GM18951 (cell line): ENCODE measurements at regions of chr14 and their contacts with region 1.

Region 1: GRCh38 chr14:45267071-45267470 is 14.1 kb upstream of the MIS18BP1 start:
- POLR2A ChIP-seq: no peak

Region 2: GRCh38 chr14:44951051-44951450 is 316.0 kb before region 1 on chr14:
- in situ Hi-C with region 1: loop called (anchors 10 kb)
- POLR2A ChIP-seq: no peak

Region 3: GRCh38 chr14:44995196-44995595 is 271.9 kb before region 1 on chr14:
- in situ Hi-C with region 1: no loop called
- POLR2A ChIP-seq: no peak